ENCODE measurements at regions of chr4 and their contacts with region 1.

Region 1: DNA sequence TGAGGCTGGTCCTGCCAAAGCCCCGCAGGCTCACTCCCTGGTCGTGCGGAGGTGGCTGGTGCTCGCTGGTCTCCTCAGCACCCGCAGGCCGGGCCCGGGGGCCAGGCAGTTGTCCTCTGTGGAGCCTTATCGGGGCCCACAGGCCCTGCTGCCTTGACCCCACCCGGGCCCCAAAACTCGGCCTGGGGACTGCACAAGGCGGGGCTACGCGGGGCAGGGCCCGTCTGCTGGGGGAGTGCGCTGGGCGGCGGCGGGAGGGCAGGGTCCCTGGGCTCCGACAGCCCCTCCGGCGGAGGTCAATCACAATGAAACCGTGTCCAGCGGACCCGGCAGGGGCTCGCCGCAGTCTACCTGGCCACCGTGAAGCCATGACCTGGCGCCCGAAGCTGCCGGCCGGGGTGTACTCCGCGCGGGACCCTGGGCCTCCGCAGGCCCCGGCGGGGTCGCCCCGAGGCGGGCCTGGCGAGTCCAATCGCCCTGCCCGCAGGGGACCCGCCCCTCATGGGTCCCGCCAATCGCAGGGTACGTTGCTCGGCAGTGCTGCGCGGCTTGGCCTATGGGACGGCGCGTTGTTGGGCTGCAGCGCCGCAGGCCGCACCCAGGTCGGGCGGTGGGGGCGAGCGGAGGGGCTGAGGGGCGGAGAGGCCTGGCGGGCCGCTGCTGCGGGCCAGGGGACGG is at the start of gene ADD1:
- DNase-seq: peak; percentile 93 to 97
- ATAC-seq: peak; percentile 99
- H3K4me3 ChIP-seq: peak within 1 kb of the TSS; percentile 83 to 94
- H3K27ac ChIP-seq: peak within 1 kb of the TSS; percentile 57 to 93
- H3K4me1 ChIP-seq: peaks cover 0 to 5% of the 10 kb centered on the region in 2 donors
- H3K27me3 ChIP-seq: no peaks in the 10 kb centered on the region
- total RNA-seq, gene ADD1: 305 to 351 TPM

Region 2: DNA sequence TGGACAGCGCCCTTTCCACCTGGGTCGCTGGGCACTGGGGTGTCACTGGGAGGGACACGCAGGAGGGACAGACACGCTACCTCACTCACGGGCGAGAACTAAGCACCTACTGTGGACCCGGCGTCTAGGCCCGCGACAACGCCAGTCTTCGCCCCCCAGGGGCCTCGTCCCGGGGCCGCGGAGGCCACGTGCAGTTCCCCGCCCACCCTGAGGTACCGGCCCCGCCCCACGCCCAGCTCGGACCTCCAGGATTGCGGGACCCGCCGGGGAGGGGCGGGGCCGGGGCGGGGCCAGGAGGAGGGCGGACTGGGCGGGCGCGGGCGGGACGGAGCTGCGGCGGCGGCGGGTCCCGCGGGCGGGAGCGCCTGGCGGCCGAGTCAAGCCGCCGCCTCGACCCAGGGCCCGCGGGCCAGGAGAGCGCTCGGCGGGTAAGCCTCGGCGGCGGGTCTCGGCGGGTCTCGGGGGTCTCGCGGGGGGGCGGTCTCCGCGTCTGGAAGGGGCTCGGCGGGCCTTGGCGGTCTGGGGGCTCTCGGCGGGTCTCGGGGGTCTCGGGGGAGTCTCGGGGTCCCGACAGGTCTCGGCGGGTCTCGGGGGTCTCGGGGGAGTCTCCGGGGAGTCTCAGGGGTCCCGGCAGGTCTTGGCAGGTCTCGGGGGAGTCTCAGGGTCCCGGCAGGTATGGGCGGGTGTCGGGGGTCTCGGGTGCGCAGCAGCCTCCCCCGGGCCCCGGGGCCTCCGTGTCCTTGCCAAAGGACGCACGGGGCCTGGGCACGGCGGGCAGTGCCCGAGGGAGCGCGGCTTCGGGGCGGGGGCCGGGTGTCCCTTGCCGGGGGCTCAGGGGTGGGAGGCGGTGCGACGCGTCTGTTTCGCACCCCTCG is 50.5 kb before region 1 on chr4 and contains the start of gene SH3BP2:
- intact Hi-C with region 1: loop called in 1 of 2 experiments (anchors 5 kb)
- DNase-seq: peak; percentile 89 to 95
- ATAC-seq: peak; percentile 83
- H3K4me3 ChIP-seq: peak within 1 kb of the TSS in 1 of 2 donors; percentile 30
- H3K27ac ChIP-seq: no peak within 1 kb of the TSS
- H3K4me1 ChIP-seq: no peaks in the 10 kb centered on the region
- H3K27me3 ChIP-seq: no peaks in the 10 kb centered on the region
- total RNA-seq, gene SH3BP2: 47.8 to 75.4 TPM

Region 3: DNA sequence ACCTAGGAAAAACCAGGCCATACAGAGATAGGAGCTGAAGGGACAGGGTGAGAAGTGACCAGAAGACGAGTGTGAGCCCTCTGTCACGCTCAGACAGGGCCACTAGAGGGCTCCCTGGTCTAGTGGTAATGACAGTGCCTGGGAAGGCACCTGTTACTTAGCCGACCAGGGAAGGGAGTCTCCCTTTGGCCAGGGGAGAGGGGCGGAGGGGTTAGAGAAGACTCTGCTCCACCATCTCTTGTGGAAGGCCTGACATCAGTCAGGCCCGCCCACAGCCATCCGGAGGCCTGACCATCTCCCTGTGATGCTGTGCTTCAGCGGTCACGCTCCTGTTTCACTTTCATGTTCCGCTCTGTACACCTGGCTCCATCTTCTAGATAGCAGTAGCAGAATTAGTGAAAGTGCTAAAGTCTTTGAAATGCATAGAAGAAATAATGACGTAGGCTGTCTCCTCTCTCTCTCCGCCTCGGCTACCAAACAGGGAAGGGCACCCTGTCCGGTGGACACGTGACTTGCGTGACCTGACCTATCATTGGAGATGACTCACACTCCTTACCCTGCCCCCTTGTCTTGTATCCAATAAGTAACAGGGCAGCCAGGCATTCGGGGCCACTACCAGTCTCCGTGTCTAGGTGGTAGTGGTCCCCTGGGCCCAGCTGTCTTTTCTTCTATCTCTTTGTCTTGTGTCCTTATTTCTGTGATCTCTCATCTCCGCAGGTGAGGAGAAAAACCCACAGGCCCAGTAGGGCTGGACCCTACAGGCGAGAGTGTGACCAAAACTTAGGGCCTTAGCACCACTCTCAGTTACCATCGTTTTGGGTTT is 204.3 kb after region 1 on chr4:
- intact Hi-C with region 1: no loop called
- DNase-seq: peak; percentile 76 to 82
- ATAC-seq: peak; percentile 59
- H3K4me3 ChIP-seq: no peak overlapping the region
- H3K27ac ChIP-seq: no peak overlapping the region
- H3K4me1 ChIP-seq: no peaks in the 10 kb centered on the region
- H3K27me3 ChIP-seq: no peaks in the 10 kb centered on the region